Right cardiac atrium (tissue), 5 donors: ENCODE measurements at regions of chr16 and their contacts with region 1.

Region 1: DNA sequence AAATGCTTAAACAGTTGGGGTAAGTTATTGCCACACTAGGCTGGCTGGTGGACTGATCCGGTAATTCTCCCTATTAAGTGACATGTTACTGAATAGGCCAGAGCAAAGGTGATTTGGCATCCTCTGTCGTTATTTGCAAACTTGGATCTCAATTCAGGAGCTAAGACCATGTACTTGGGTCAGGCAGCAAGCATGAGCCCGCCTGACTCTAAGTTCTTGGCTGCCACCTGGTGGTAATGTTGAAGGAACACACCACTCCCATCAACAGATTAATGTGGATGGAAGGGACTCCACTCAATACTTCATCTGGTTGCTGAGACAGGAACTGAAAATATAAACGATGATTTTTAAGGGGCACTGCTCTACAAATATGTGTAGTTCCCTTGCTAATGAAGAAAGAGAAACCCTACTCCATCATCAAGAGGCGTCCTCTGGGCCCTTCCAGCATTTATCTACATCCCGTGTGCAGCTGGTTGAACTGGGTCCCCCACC is 70.8 kb downstream of the EMP2 start:
- DNase-seq: peak in 2 of 3 donors; percentile 28 to 58
- ATAC-seq: peak; percentile 89 to 90
- H3K4me3 ChIP-seq: no peak overlapping the region
- H3K27ac ChIP-seq: no peak overlapping the region
- H3K4me1 ChIP-seq: no peaks in the 10 kb centered on the region
- H3K27me3 ChIP-seq: no peaks in the 10 kb centered on the region

Region 2: GRCh38 chr16:10256784-10257641 is 252.6 kb before region 1 on chr16:
- intact Hi-C with region 1: loop called in 3 of 4 experiments (anchors 2 to 5 kb)
- DNase-seq: peak; percentile 26 to 62 (median 51)
- ATAC-seq: peak in 1 of 2 donors; percentile 77
- H3K4me3 ChIP-seq: no peak overlapping the region
- H3K27ac ChIP-seq: no peak overlapping the region
- H3K4me1 ChIP-seq: no peaks in the 10 kb centered on the region
- H3K27me3 ChIP-seq: no peaks in the 10 kb centered on the region

Region 3: DNA sequence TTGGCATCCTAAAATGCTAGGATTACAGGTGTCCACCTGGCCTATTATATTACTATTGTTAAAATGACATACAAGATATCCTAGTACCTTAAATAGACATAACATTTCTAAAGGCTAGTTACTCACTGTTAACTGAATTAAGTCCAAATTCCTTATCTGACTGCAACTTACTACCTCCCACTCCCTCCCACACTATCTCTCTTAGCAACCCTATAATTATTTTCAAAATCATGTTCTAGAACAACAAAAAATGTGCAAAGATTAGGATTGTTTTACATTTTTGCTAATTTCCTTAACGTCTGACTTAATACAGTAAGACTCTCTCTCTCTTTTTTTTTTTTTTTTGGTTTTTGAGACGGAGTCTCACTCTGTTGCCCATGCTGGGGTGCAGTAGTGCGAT is 126.0 kb before region 1 on chr16:
- intact Hi-C with region 1: no loop called
- DNase-seq: no peak
- ATAC-seq: no peak
- H3K4me3 ChIP-seq: no peak overlapping the region
- H3K27ac ChIP-seq: no peak overlapping the region
- H3K4me1 ChIP-seq: no peaks in the 10 kb centered on the region
- H3K27me3 ChIP-seq: no peaks in the 10 kb centered on the region